ENCODE measurements at regions of chr9 and their contacts with region 1.

Region 1: DNA sequence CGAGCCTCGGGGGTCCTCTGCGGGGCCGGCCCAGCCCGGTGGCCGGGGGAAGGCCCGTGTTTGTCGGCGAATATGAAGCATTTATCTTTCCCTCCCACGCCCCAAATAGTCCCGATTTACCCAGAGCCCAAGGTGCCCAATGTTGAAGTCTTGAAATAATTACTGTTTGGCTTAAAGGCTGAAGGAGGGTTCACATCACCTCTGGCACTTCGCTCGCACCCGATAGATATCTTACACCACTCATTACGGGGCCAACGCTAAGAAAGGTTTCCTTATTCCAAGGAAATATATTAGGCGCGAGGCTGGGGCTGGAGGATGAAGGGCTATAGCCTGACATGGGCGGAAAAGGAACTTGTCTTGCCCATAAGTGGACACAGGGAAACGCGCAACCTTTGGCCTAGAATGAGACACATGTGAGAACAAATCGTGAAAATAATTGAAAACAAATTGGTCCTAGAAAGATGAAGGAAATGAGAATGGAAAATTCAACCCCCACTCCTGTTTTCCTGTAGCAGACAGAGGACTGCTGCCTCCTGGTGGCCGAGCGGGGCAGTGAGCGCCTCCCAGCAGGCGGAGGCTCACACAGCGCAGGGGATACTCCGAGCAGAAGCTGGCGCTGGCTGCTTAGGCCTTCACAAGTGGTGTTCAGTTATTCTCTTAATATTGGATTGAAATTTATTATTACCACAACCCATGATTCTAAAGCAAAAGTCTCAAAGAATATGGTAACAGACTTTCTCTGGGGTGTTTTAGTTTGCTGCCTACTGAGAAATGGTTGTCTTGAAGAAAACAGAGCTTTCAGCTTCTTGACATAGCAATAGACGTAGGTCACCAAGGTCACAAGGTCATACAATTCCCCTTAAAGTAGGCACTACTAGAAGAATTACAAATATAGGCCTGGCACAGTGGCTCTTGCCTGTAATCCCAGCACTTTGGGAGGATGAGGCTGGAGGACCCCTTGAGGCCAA is 7.9 kb downstream of the CCL21 start:
- DNase-seq: peak; percentile 59 to 84 (median 70)
- H3K4me3 ChIP-seq: peak overlapping the region; percentile 62
- H3K4me3 Mint-ChIP-seq: peak overlapping the region; percentile 72 to 89 (median 83)
- H3K27ac ChIP-seq: no peak overlapping the region
- H3K27ac Mint-ChIP-seq: peak overlapping the region in 6 of 8 donors; percentile 10 to 70 (median 51)
- H3K4me1 ChIP-seq: peaks cover 9% of the 10 kb centered on the region
- H3K4me1 Mint-ChIP-seq: peaks cover 6 to 16% (median 13%) of the 10 kb centered on the region in 3 donors
- H3K27me3 ChIP-seq: no peaks in the 10 kb centered on the region
- H3K27me3 Mint-ChIP-seq: peaks cover 8 to 9% of the 10 kb centered on the region in 2 donors

Region 2: GRCh38 chr9:34659592-34660535 is 42.2 kb before region 1 on chr9:
- CTCF ChIA-PET with region 1: interaction called, 32 read pairs
- POLR2A ChIA-PET with region 1: interaction called, 4 read pairs
- DNase-seq: no peak
- H3K4me3 ChIP-seq: no peak overlapping the region
- H3K4me3 Mint-ChIP-seq: peak overlapping the region in 1 of 7 donors; percentile 8
- H3K27ac ChIP-seq: no peak overlapping the region
- H3K27ac Mint-ChIP-seq: peak overlapping the region in 2 of 8 donors; percentile 66 to 75
- H3K4me1 ChIP-seq: peaks cover 37% of the 10 kb centered on the region
- H3K4me1 Mint-ChIP-seq: peaks cover 28 to 39% (median 35%) of the 10 kb centered on the region in 3 donors
- H3K27me3 ChIP-seq: no peaks in the 10 kb centered on the region
- H3K27me3 Mint-ChIP-seq: no peaks in the 10 kb centered on the region

Region 3: GRCh38 chr9:34665381-34666250 is 36.4 kb before region 1 on chr9:
- CTCF ChIA-PET with region 1: interaction called, 32 read pairs
- POLR2A ChIA-PET with region 1: no interaction called
- DNase-seq: peak; percentile 84 to 93 (median 86)
- H3K4me3 ChIP-seq: peak overlapping the region; percentile 87
- H3K4me3 Mint-ChIP-seq: peak overlapping the region; percentile 82 to 97 (median 89)
- H3K27ac ChIP-seq: peak overlapping the region; percentile 96
- H3K27ac Mint-ChIP-seq: peak overlapping the region; percentile 87 to 99 (median 98)
- H3K4me1 ChIP-seq: peaks cover 48% of the 10 kb centered on the region
- H3K4me1 Mint-ChIP-seq: peaks cover 34 to 55% (median 41%) of the 10 kb centered on the region in 3 donors
- H3K27me3 ChIP-seq: no peaks in the 10 kb centered on the region
- H3K27me3 Mint-ChIP-seq: peaks cover 0 to 4% of the 10 kb centered on the region in 2 donors

Region 4: GRCh38 chr9:34690983-34691935 is 10.8 kb before region 1 on chr9 and contains the start of gene CCL19:
- CTCF ChIA-PET with region 1: interaction called, 14 read pairs
- POLR2A ChIA-PET with region 1: no interaction called
- DNase-seq: no peak
- H3K4me3 ChIP-seq: no peak within 1 kb of the TSS
- H3K4me3 Mint-ChIP-seq: no peak within 1 kb of the TSS
- H3K27ac ChIP-seq: no peak within 1 kb of the TSS
- H3K27ac Mint-ChIP-seq: peak within 1 kb of the TSS in 1 of 8 donors; percentile 65
- H3K4me1 ChIP-seq: no peaks in the 10 kb centered on the region
- H3K4me1 Mint-ChIP-seq: no peaks in the 10 kb centered on the region
- H3K27me3 ChIP-seq: no peaks in the 10 kb centered on the region
- H3K27me3 Mint-ChIP-seq: peaks cover 3 to 24% of the 10 kb centered on the region in 2 donors
- total RNA-seq, gene CCL19: not detected